Calu3 (cell line): ENCODE measurements at regions of chr11 and their contacts with region 1.

Region 1: DNA sequence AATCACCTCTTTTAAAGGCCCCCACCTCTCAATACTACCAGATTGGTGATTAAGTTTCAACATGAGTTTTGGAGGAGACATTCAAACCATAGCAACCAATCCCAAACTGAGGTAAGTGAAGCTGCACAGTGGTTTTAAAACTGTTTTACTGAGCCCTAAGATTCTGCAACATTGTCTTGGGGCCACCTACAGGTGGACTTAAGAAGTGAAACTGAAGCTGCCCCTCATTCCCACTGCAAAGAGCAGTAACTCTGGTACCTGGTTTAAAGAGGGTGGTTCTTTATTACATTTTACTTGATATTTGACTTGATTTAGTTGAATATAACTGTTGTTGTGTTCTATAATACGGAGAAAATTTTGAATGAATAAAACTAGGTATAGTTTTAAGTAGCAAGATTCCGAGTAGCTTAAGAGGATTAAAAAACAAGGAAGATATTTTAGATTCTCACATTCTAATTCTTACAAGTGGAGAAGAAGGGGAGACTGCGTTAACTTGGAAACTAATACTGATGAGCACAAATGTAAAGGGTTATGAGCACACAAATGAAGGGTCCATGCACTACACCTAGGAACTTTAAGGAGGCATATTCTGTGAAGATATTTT is 26.7 kb downstream of the SYT9 start:
- DNase-seq: peak; percentile 40
- H3K4me3 Mint-ChIP-seq: no peak overlapping the region
- H3K27ac Mint-ChIP-seq: no peak overlapping the region
- H3K4me1 Mint-ChIP-seq: peaks cover 8% of the 10 kb centered on the region
- H3K27me3 Mint-ChIP-seq: peaks cover 58% of the 10 kb centered on the region
- CTCF ChIP-seq: peak; percentile 32

Region 2: DNA sequence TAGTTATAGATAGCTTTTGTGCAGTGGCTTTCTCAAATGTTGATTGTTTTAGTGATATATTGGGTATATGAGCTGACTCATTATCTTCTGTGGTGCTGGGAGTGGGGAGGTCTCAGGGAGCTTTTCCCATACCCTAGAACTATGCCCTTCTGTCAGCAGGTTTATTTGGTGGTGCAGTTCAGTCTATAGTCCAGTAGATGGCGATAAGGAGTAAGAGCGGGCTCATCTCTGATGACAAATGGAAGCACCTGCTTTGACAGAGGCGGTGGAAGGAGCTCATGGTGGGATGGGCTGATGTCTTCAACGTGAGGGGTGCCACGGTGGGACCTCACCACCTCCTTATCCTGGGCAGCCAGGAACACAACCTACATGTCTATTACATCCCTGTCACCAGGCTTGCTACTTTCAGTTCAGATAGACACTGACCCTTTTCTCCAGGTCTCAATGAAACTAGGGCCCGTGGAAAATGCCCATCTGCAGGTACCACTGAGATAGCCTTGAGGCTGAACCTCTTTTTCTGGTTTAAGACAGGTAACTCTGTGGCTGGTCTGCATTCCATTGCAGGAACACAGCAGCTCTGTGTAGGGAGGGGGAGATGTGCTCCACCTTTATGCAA is 465.9 kb before region 1 on chr11:
- CTCF ChIA-PET with region 1: interaction called, 4 read pairs
- intact Hi-C with region 1: loop called (anchors 1 kb)
- DNase-seq: peak; percentile 29
- H3K4me3 Mint-ChIP-seq: no peak overlapping the region
- H3K27ac Mint-ChIP-seq: no peak overlapping the region
- H3K4me1 Mint-ChIP-seq: no peaks in the 10 kb centered on the region
- H3K27me3 Mint-ChIP-seq: no peaks in the 10 kb centered on the region
- CTCF ChIP-seq: peak; percentile 79